ENCODE measurements at regions of chr11 and their contacts with region 1.

Region 1: GRCh38 chr11:69296890-69297786 is 3.2 kb downstream of the MYEOV start:
- DNase-seq: peak; percentile 81 to 91 (median 85)
- ATAC-seq: peak; percentile 45 to 60 (median 52)
- H3K4me3 ChIP-seq: peak overlapping the region in 1 of 3 donors; percentile 24
- H3K27ac ChIP-seq: peak overlapping the region in 2 of 3 donors; percentile 51 to 84
- H3K4me1 ChIP-seq: peaks cover 0 to 21% (median 4%) of the 10 kb centered on the region in 4 donors
- H3K27me3 ChIP-seq: no peaks in the 10 kb centered on the region
- CTCF ChIP-seq: no peak
- POLR2A ChIP-seq: no peak

Region 2: GRCh38 chr11:68810164-68810563 is 487.0 kb before region 1 on chr11:
- intact Hi-C with region 1: no loop called
- DNase-seq: peak in 2 of 3 donors; percentile 41 to 66
- ATAC-seq: peak in 3 of 4 donors; percentile 31 to 72 (median 35)
- H3K4me3 ChIP-seq: no peak overlapping the region
- H3K27ac ChIP-seq: no peak overlapping the region
- H3K4me1 ChIP-seq: peaks cover 0 to 11% (median 0%) of the 10 kb centered on the region in 4 donors
- H3K27me3 ChIP-seq: no peaks in the 10 kb centered on the region
- CTCF ChIP-seq: no peak
- POLR2A ChIP-seq: no peak

Region 3: GRCh38 chr11:68927280-68928135 is 369.6 kb before region 1 on chr11:
- intact Hi-C with region 1: no loop called
- DNase-seq: no peak
- ATAC-seq: peak; percentile 50 to 83 (median 68)
- H3K4me3 ChIP-seq: no peak overlapping the region
- H3K27ac ChIP-seq: no peak overlapping the region
- H3K4me1 ChIP-seq: no peaks in the 10 kb centered on the region
- H3K27me3 ChIP-seq: no peaks in the 10 kb centered on the region
- CTCF ChIP-seq: no peak
- POLR2A ChIP-seq: no peak

Region 4: DNA sequence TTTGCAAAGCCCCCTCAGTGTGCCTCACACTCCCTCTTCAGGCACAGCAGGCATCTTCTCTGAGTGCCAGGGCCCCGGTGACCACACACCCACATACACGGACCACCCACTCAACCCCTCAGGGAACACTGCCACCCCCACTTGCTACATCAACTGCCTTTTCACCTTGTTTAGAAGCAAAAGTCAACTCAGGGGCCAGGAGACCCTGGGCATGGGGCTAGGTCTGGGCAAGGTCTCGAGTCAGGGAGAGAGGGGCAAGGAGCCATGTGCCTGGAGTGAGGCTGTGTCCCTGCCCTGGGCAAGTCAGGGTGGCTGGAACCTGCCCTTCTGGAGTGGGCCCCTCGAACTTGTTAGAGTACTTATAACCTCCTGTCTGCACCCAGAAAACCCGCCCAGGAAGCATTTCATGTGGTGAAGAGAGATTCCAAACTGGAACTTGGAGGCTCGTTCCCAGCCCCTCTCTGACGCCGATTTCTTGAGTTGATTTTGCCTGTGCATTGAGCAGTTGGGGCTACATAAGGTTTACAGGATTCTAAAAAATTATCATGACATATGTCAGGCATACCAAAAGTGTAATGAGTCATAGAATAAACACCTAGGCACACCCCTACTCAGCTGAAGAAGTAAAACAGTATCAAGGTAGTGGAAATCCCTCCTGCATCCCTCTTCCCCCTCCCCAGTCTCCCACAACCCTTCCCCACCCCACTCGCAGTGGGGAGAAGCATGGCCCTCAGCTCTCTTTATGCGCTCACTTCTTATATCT is 71.2 kb after region 1 on chr11:
- intact Hi-C with region 1: no loop called
- DNase-seq: peak in 1 of 3 donors; percentile 31
- ATAC-seq: no peak
- H3K4me3 ChIP-seq: no peak overlapping the region
- H3K27ac ChIP-seq: no peak overlapping the region
- H3K4me1 ChIP-seq: no peaks in the 10 kb centered on the region
- H3K27me3 ChIP-seq: no peaks in the 10 kb centered on the region
- CTCF ChIP-seq: no peak
- POLR2A ChIP-seq: no peak

Region 5: GRCh38 chr11:69436973-69437875 is 140.1 kb after region 1 on chr11:
- intact Hi-C with region 1: loop called in 1 of 2 experiments (anchors 10 kb)
- DNase-seq: peak; percentile 49 to 65 (median 65)
- ATAC-seq: peak; percentile 51 to 79 (median 68)
- H3K4me3 ChIP-seq: no peak overlapping the region
- H3K27ac ChIP-seq: no peak overlapping the region
- H3K4me1 ChIP-seq: peaks cover 0 to 7% (median 0%) of the 10 kb centered on the region in 4 donors
- H3K27me3 ChIP-seq: no peaks in the 10 kb centered on the region
- CTCF ChIP-seq: peak in 1 of 4 donors; percentile 15
- POLR2A ChIP-seq: no peak

Region 6: GRCh38 chr11:69638941-69639681 is 342.0 kb after region 1 on chr11:
- intact Hi-C with region 1: loop called in 1 of 2 experiments (anchors 5 kb)
- DNase-seq: peak; percentile 93 to 96 (median 95)
- ATAC-seq: peak; percentile 61 to 71 (median 65)
- H3K4me3 ChIP-seq: peak overlapping the region; percentile 42 to 49 (median 48)
- H3K27ac ChIP-seq: peak overlapping the region in 2 of 3 donors; percentile 22 to 34
- H3K4me1 ChIP-seq: peaks cover 0 to 59% (median 17%) of the 10 kb centered on the region in 4 donors
- H3K27me3 ChIP-seq: no peaks in the 10 kb centered on the region
- CTCF ChIP-seq: no peak
- POLR2A ChIP-seq: peak; percentile 82

Region 7: DNA sequence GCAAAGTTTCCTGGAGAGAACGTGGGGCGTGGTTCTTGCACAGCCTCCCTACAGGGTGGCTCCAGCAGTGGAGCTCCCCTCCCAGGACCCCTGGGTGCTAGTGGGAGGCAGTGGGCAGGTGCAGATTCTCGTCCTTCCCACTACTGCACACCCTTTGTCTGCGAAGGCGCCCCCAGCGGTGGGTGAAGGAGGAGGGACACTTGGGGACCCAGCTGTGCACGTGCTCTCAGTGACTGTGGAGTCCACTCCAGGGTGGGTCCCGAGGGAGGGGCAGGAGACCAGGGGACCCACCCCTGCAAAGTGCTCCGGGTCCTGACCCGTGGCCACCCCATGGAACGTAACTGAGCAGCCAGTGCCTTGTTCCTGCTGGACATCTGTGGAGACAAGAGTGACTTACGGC is 348.2 kb after region 1 on chr11:
- intact Hi-C with region 1: loop called in 1 of 2 experiments (anchors 5 kb)
- DNase-seq: peak in 2 of 3 donors; percentile 14 to 56
- ATAC-seq: no peak
- H3K4me3 ChIP-seq: no peak overlapping the region
- H3K27ac ChIP-seq: no peak overlapping the region
- H3K4me1 ChIP-seq: peaks cover 0 to 20% (median 10%) of the 10 kb centered on the region in 4 donors
- H3K27me3 ChIP-seq: no peaks in the 10 kb centered on the region
- CTCF ChIP-seq: no peak
- POLR2A ChIP-seq: no peak